ENCODE measurements at regions of chr3 and their contacts with region 1.

Region 1: GRCh38 chr3:15815696-15816095 is 17.9 kb upstream of the ANKRD28 start:
- DNase-seq: no peak
- H3K4me3 ChIP-seq: no peak overlapping the region
- H3K27ac ChIP-seq: no peak overlapping the region
- H3K4me1 ChIP-seq: no peaks in the 10 kb centered on the region
- H3K27me3 ChIP-seq: no peaks in the 10 kb centered on the region
- CTCF ChIP-seq: peak in 3 of 4 experiments; percentile 49 to 65 (median 59)
- POLR2A ChIP-seq: no peak

Region 2: DNA sequence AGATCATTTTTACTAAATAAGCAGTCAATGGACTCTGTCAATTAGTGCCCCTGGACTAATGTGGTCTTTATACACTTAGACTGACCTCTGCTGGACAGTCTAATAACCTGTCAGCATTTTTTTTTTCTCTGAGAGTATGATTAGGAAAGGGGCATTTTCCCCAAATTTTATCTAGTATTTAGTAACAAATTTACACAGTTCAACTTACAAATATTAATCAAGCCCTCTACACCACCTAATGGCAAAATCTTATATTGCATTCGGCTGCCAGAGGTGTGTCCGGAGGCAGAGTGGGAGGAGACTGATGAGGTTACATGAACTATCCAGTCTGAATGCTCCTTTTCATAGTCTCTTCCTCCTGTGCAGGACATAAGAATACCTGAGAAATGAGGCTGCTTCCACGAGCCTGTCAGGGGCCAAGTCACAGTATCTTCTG is 258.2 kb before region 1 on chr3:
- intact Hi-C with region 1: no loop called
- DNase-seq: peak; percentile 24
- H3K4me3 ChIP-seq: no peak overlapping the region
- H3K27ac ChIP-seq: no peak overlapping the region
- H3K4me1 ChIP-seq: no peaks in the 10 kb centered on the region
- H3K27me3 ChIP-seq: no peaks in the 10 kb centered on the region
- CTCF ChIP-seq: peak in 3 of 4 experiments; percentile 39 to 62 (median 55)
- POLR2A ChIP-seq: no peak

Region 3: DNA sequence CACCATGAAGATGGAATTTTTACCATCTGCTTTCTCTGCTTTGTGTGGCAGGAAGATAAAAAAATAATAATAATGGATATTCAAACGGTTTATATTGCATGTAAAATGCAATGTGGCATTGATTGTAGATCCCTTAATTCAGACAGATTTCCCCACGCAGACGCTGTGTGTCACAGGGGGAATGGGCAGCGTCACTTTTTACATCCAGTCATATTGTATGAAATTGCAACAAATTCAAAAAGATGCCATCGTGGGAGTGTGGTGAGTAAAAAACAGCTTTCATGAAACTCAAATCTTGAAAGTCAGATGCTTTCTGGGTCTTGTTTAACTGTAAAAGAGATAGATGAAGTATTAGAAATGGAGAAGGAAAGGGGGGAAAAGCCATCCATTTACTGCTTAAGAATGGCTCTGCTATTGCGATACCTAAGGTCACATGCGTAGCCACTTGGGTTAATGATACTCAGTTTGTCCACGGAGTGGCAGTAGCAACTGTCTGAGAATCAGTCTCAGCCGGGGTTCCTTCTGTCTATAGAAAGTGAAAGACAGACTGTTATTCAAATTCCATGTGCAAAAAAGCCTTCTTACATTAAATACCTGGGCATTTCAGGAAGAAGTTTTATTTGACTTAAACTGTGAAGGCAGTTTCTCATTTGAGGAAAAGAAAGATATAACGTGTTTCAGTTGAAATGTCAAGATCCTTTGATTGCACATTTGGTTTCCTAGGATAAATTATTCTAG is 185.7 kb before region 1 on chr3:
- intact Hi-C with region 1: loop called (anchors 1 kb)
- DNase-seq: peak; percentile 67
- H3K4me3 ChIP-seq: no peak overlapping the region
- H3K27ac ChIP-seq: no peak overlapping the region
- H3K4me1 ChIP-seq: peaks cover 6% of the 10 kb centered on the region
- H3K27me3 ChIP-seq: no peaks in the 10 kb centered on the region
- CTCF ChIP-seq: peak; percentile 54 to 76 (median 72)
- POLR2A ChIP-seq: no peak

Region 4: DNA sequence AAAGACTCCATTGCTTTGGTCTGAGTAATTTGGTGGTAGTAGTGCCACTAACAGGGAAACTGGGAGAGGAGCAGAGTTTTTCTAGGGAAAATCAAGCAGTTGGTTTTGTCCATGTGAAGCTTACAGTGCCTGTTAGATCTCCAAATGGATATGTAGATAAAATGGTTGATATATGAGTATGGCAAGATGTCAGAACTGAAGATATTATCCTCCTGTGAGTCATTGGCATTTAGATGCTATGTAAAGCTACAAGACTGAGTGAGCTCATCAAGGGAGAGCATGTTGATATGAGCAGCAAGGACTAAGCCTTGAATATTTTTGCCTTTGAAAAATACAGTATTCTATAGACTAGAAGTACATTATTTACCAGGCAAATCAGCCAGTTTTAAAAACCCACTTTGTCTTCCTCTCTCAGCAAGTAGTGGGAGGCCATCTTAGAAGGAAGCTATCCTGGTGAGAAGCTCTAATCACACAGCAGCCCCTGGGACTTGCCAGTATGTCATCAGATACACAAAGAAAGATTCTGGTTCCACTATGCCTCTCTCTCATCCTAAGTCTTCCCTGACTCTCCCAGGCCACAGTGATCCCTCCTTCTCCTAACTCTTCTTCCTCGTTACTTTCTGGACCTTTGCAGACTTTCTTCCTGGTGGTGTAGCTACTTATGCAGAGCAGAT is 59.5 kb after region 1 on chr3:
- intact Hi-C with region 1: no loop called
- DNase-seq: no peak
- H3K4me3 ChIP-seq: no peak overlapping the region
- H3K27ac ChIP-seq: no peak overlapping the region
- H3K4me1 ChIP-seq: no peaks in the 10 kb centered on the region
- H3K27me3 ChIP-seq: no peaks in the 10 kb centered on the region
- CTCF ChIP-seq: no peak
- POLR2A ChIP-seq: no peak

Region 5: GRCh38 chr3:16048435-16049318 is 233.0 kb after region 1 on chr3:
- intact Hi-C with region 1: loop called (anchors 10 kb)
- DNase-seq: peak; percentile 54
- H3K4me3 ChIP-seq: no peak overlapping the region
- H3K27ac ChIP-seq: no peak overlapping the region
- H3K4me1 ChIP-seq: no peaks in the 10 kb centered on the region
- H3K27me3 ChIP-seq: no peaks in the 10 kb centered on the region
- CTCF ChIP-seq: peak; percentile 51 to 83 (median 80)
- POLR2A ChIP-seq: no peak

Region 6: DNA sequence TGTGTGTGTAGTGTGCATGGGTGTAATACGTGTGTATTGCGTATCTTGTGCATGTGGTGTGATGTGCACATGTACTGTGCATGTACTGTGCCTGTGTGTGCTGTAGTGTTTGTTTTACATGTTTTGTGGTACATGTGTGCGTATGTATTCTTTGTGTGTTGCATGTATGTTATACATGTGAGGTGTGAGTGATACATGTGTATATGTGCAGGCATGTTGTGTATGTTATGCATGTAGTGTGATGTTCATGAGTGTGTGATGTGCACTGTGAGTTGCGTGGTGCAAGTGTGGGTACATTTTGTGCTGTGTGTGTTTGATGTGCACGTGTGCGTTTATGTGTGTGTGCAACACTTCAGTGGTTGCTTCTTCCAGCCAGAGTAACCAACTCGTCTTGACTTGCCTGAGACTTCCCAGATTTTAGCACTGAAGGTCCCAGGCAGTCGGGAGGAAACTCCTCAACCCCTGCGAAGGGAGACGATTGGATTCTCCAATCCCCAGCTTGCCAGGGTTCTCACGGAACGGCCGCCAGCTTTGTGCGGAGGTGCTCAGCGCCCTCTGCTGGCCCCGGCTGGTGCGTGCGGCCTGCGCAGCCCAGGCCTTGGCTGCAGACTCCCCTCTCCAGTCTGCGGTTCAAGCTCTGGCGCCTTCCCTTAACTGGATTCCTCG is 362.4 kb after region 1 on chr3:
- intact Hi-C with region 1: loop called (anchors 2 kb)
- DNase-seq: peak; percentile 61
- H3K4me3 ChIP-seq: no peak overlapping the region
- H3K27ac ChIP-seq: no peak overlapping the region
- H3K4me1 ChIP-seq: peaks cover 2% of the 10 kb centered on the region
- H3K27me3 ChIP-seq: no peaks in the 10 kb centered on the region
- CTCF ChIP-seq: peak; percentile 90 to 92 (median 92)
- POLR2A ChIP-seq: no peak

Region 7: DNA sequence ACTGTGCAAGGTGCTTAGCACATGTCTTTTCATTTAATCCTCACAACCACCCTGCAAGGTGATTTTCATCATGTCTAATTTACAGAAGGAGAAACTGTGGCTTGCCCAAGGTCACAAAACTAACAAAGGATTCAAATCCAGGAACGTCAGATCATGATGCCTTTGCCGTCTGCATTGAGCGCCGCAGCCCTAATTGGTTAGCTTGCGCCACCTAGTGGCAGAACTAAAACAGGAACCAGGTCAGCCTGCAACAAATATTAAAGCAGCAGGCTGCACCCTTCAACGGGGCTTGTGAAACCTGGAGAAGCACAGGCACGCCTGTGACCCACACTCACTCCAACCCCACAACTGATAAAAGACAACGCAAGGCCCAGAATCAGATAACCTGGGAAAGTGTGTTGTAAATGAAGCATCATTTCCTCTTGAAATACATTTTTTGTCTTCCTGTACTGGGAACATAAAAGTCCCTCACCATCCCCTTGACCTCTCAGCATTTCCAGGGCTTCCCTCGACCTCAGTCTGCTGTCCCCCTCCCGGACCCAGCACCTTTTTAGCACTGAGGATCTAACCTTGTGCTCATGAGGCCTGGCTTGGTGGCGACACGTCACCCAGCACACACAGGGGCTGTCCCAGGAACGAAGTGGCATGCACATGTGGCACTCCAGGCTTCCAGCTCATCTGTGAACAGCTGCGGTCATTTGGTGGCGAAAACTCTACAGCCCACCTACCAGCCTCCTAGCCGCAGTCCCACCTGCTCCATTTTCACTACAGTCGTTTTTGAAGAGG is 431.8 kb after region 1 on chr3:
- intact Hi-C with region 1: loop called (anchors 5 kb)
- DNase-seq: peak; percentile 76
- H3K4me3 ChIP-seq: no peak overlapping the region
- H3K27ac ChIP-seq: no peak overlapping the region
- H3K4me1 ChIP-seq: no peaks in the 10 kb centered on the region
- H3K27me3 ChIP-seq: no peaks in the 10 kb centered on the region
- CTCF ChIP-seq: peak; percentile 87 to 96 (median 90)
- POLR2A ChIP-seq: no peak